ENCODE measurements at regions of chr6 and their contacts with region 1.

Region 1: GRCh38 chr6:52233975-52234823 is 10.1 kb downstream of the IL17F start:
- ATAC-seq: peak; percentile 27 to 99 (median 52)
- H3K4me3 ChIP-seq: no peak overlapping the region
- H3K27ac ChIP-seq: no peak overlapping the region
- H3K4me1 ChIP-seq: no peaks in the 10 kb centered on the region

Region 2: GRCh38 chr6:51855310-51856082 is 378.7 kb before region 1 on chr6:
- in situ Hi-C with region 1: loop called in 1 of 9 experiments (anchors 25 kb)
- ATAC-seq: peak in 4 of 8 experiments; percentile 43 to 84 (median 60)
- H3K4me3 ChIP-seq: no peak overlapping the region
- H3K27ac ChIP-seq: no peak overlapping the region
- H3K4me1 ChIP-seq: no peaks in the 10 kb centered on the region

Region 3: GRCh38 chr6:52087498-52087999 is 146.7 kb before region 1 on chr6 and contains the start of gene PKHD1:
- in situ Hi-C with region 1: no loop called
- ATAC-seq: peak in 2 of 8 experiments; percentile 24 to 25
- H3K4me3 ChIP-seq: no peak within 1 kb of the TSS
- H3K27ac ChIP-seq: no peak within 1 kb of the TSS
- H3K4me1 ChIP-seq: no peaks in the 10 kb centered on the region
- total RNA-seq, gene PKHD1: under 0.01 to 0.14 (median 0.09) TPM in 7 of 8 experiments, not detected in the other

Region 4: GRCh38 chr6:52162940-52163908 is 71.0 kb before region 1 on chr6:
- in situ Hi-C with region 1: loop called in 1 of 9 experiments (anchors 10 kb)
- ATAC-seq: peak in 3 of 8 experiments; percentile 68 to 77 (median 72)
- H3K4me3 ChIP-seq: no peak overlapping the region
- H3K27ac ChIP-seq: no peak overlapping the region
- H3K4me1 ChIP-seq: peaks cover 0 to 4% of the 10 kb centered on the region in 2 donors

Region 5: GRCh38 chr6:52426680-52427079 is 192.5 kb after region 1 on chr6:
- in situ Hi-C with region 1: no loop called
- ATAC-seq: no peak
- H3K4me3 ChIP-seq: no peak overlapping the region
- H3K27ac ChIP-seq: no peak overlapping the region
- H3K4me1 ChIP-seq: peaks cover 0 to 3% of the 10 kb centered on the region in 2 donors